AG04450 (cell line): ENCODE measurements at regions of chr16 and their contacts with region 1.

Region 1: DNA sequence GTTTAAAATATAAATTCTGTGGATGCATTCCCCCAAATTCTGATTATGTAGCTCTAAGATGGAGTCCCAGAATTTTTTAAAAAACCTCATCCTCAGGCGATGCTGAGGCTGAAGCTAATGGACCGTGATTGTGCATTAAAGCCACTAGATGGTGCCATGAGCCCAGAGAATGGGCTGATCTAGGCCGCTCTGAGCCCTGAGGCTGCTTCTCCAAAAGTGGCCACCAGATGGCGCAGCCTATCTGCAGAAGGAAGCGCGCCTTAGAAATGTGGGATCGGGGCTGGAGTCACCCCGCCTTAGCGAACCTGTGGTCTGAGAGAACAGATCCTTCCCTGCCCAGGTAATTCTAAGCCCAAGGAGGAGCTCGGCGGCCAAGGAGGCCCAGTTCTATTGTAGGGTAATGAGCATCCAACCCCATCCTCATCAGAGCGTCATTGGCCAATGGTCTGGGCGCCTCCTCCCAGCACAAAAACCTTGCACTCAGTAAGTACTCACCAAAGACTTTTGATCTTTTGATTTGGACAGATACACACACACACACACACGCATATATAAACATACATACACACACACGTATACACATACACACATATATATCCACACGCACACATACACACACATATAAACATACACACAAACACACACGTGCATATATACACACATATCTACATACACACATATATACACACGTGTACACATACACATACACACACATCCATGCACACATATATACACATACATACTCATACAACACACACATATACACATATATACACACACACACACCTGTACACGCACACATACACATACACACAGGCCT is 13.7 kb upstream of the MMP2 start:
- DNase-seq: peak; percentile 72
- H3K4me3 ChIP-seq: peak overlapping the region; percentile 29; the same call in 1 of the 2 replicates
- H3K27ac ChIP-seq: no peak overlapping the region
- H3K27me3 ChIP-seq: no peaks in the 10 kb centered on the region
- CTCF ChIP-seq: peak; percentile 99

Region 2: GRCh38 chr16:54780266-54780665 is 685.0 kb before region 1 on chr16:
- CTCF ChIA-PET with region 1: no interaction called
- POLR2A ChIA-PET with region 1: no interaction called
- DNase-seq: no peak
- H3K4me3 ChIP-seq: no peak overlapping the region
- H3K27ac ChIP-seq: no peak overlapping the region
- H3K27me3 ChIP-seq: no peaks in the 10 kb centered on the region
- CTCF ChIP-seq: no peak

Region 3: GRCh38 chr16:55370762-55371482 is 94.4 kb before region 1 on chr16:
- CTCF ChIA-PET with region 1: no interaction called
- POLR2A ChIA-PET with region 1: no interaction called
- DNase-seq: no peak
- H3K4me3 ChIP-seq: no peak overlapping the region
- H3K27ac ChIP-seq: no peak overlapping the region
- H3K27me3 ChIP-seq: peaks cover 19% of the 10 kb centered on the region
- CTCF ChIP-seq: peak; percentile 25; the same call in 1 of the 2 replicates

Region 4: DNA sequence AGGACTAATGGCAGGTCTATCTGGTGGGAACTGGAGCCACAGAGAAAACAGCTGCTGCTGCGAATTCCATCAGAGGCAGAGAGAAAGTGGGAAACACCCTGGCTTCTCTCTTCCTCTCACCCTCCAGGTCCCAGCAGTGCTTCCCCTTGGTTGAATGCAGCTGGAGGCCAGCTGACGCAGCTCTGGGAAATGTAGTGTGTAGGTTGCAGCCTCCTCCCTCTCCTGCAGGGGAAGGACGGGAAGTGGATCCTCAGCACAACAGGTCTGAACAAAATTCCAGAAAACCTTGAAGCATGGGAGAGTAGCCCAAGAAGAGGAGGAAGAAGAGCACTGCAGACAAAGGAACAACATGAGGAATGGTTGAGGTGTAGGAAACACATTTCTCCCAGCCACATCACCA is 54.1 kb before region 1 on chr16:
- CTCF ChIA-PET with region 1: no interaction called
- POLR2A ChIA-PET with region 1: no interaction called
- DNase-seq: no peak
- H3K4me3 ChIP-seq: no peak overlapping the region
- H3K27ac ChIP-seq: no peak overlapping the region
- H3K27me3 ChIP-seq: no peaks in the 10 kb centered on the region
- CTCF ChIP-seq: no peak

Region 5: GRCh38 chr16:55454861-55455260 is 10.4 kb before region 1 on chr16:
- CTCF ChIA-PET with region 1: interaction called, 34 read pairs
- POLR2A ChIA-PET with region 1: no interaction called
- DNase-seq: no peak
- H3K4me3 ChIP-seq: no peak overlapping the region
- H3K27ac ChIP-seq: no peak overlapping the region
- H3K27me3 ChIP-seq: peaks cover 8% of the 10 kb centered on the region
- CTCF ChIP-seq: no peak

Region 6: GRCh38 chr16:55502801-55503366 is 37.6 kb after region 1 on chr16:
- CTCF ChIA-PET with region 1: interaction called, 76 read pairs
- POLR2A ChIA-PET with region 1: interaction called, 4 read pairs
- DNase-seq: peak; percentile 91
- H3K4me3 ChIP-seq: 0 out of 2 replicates have a peak overlapping the region, but pooled peaks have one; percentile 7
- H3K27ac ChIP-seq: peak overlapping the region; percentile 47
- H3K27me3 ChIP-seq: no peaks in the 10 kb centered on the region
- CTCF ChIP-seq: peak; percentile 30

Region 7: DNA sequence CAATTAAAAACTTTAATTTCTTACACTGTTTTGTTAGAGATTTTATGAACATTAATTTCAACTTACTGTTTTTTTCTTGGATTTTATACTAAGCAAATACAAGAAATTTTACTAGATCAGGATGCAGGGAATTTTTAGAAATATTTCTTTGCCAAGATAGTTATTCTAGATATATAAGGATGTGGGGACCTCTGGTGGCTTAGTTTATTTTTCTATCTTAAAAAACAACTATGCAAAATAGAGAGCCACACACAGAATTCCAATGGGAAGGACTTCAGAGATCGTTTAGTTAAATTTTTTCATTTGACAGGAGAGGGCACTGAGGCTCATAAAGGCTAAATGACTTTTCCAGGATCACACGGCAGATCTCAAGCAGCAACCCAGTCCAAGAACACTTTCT is 78.2 kb after region 1 on chr16:
- CTCF ChIA-PET with region 1: interaction called, 252 read pairs
- POLR2A ChIA-PET with region 1: no interaction called
- DNase-seq: no peak
- H3K4me3 ChIP-seq: no peak overlapping the region
- H3K27ac ChIP-seq: no peak overlapping the region
- H3K27me3 ChIP-seq: no peaks in the 10 kb centered on the region
- CTCF ChIP-seq: peak; percentile 40

Region 8: GRCh38 chr16:55572439-55572838 is 107.2 kb after region 1 on chr16:
- CTCF ChIA-PET with region 1: interaction called, 65 read pairs
- POLR2A ChIA-PET with region 1: no interaction called
- DNase-seq: no peak
- H3K4me3 ChIP-seq: no peak overlapping the region
- H3K27ac ChIP-seq: no peak overlapping the region
- H3K27me3 ChIP-seq: no peaks in the 10 kb centered on the region
- CTCF ChIP-seq: no peak

Region 9: DNA sequence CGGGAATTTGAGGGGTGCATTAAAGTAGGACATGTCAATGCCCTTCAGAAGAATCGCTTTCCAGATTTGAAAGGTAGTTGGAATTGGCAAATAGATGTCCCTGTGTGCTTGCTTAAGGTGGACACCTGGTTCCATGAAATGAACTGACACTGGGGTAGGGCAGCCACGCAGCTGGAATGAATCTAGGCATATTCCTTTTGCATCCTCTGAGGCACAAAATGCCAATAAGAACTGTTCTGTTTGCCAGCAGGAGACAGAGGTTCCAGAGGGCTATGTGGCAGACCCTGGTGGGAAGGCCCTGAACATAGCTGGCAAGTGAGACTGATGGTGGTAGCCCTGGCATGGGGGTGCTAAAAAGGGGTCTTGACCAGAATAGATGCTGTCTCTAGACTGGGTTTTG is 252.0 kb after region 1 on chr16:
- CTCF ChIA-PET with region 1: interaction called, 542 read pairs
- POLR2A ChIA-PET with region 1: no interaction called
- DNase-seq: no peak
- H3K4me3 ChIP-seq: no peak overlapping the region
- H3K27ac ChIP-seq: no peak overlapping the region
- H3K27me3 ChIP-seq: no peaks in the 10 kb centered on the region
- CTCF ChIP-seq: no peak

Region 10: DNA sequence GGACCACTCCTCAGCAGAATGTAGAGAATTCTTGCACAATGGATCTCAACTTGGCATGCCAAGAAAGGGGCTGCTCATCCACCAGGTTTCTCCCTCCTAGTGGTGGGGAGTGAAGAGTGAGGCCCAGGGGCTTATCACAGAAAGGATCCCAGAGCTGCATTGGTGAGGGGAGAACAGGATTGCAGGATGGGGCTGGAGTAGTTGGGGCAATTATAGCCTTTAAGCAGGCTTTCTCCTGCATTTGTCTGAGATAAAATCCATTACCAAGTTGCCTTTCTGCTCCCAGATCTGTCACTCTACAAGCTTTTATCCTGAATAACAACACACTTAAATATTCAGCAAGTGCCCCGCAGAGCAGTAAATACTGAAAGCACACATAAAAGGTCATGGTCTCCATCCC is 540.7 kb after region 1 on chr16:
- CTCF ChIA-PET with region 1: no interaction called
- POLR2A ChIA-PET with region 1: no interaction called
- DNase-seq: no peak
- H3K4me3 ChIP-seq: no peak overlapping the region
- H3K27ac ChIP-seq: no peak overlapping the region
- H3K27me3 ChIP-seq: no peaks in the 10 kb centered on the region
- CTCF ChIP-seq: no peak